ENCODE measurements at regions of chr9 and their contacts with region 1.

Region 1: DNA sequence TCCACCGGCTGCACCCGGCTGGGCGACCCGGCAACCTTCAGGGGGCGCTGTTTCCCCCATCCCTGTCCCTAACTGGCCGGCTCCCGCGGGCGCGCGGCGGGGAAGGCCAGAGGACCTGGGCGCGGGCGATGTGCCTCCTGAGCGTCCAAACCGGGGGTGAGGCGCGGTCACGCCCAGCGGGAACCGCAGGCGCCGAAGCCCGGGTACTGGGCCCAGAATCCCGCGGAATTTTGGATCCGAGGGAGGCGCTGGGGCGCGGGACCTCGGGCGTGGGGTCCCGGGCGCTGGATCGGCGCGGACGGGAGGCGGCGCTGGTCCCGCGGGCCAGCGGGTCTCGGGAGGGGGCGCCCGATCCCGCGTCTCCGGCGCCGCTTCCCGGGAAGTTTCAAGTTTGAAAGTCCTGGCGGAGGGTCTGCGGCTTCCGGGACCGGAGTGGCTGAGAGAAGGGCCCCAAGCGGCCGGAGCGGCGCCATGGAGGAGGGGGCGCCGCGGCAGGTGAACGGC is at the start of gene PKN3:
- DNase-seq: peak; percentile 87
- H3K4me3 Mint-ChIP-seq: peak within 1 kb of the TSS; percentile 91
- H3K27ac Mint-ChIP-seq: peak within 1 kb of the TSS; percentile 86
- H3K4me1 Mint-ChIP-seq: peaks cover 16% of the 10 kb centered on the region
- H3K27me3 Mint-ChIP-seq: no peaks in the 10 kb centered on the region
- total RNA-seq, gene PKN3: 8.2 to 9.1 TPM

Region 2: GRCh38 chr9:128723866-128724743 is 21.6 kb after region 1 on chr9 and contains the start of gene ZDHHC12:
- CTCF ChIA-PET with region 1: interaction called, 11 read pairs
- POLR2A ChIA-PET with region 1: no interaction called
- DNase-seq: peak; percentile 100
- H3K4me3 Mint-ChIP-seq: peak within 1 kb of the TSS; percentile 94
- H3K27ac Mint-ChIP-seq: peak within 1 kb of the TSS; percentile 94
- H3K4me1 Mint-ChIP-seq: peaks cover 53% of the 10 kb centered on the region
- H3K27me3 Mint-ChIP-seq: no peaks in the 10 kb centered on the region
- total RNA-seq, gene ZDHHC12: 86.3 to 91.5 TPM